ENCODE measurements at regions of chr2 and their contacts with region 1.

Region 1: DNA sequence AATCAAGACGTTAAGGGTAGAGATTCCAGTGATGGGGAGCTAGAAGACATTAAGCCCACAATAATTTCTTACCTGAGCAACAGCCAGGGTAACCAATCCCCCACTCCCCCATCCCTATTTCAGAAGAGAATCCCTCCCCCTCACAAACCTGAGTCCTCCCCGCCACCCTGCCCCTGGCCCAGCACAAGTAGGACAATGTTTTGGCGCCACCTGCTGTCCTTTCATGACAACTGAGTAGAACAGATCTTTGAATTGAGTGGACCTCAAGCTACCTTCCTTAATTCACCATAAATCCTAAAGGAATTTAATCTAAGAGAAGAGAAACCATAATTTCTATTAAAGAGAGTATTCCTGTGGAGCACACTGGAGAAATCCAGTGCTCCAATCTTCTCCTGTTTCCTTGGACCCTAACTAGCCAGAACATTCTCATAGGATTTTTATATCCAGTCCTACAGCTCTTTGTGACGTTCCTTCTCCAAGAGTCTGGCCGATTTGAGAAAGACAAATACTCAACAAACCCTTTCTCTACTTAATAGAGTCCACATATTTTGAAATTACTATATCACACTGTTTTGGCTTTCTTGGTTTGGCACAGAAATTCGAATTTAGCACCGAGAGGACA is 41.1 kb downstream of the NHEJ1 start:
- DNase-seq: peak; percentile 49 to 68 (median 61)
- H3K4me3 ChIP-seq: no peak overlapping the region
- H3K27ac ChIP-seq: no peak overlapping the region
- H3K4me1 ChIP-seq: peaks cover 0 to 11% (median 0%) of the 10 kb centered on the region in 4 experiments
- H3K27me3 ChIP-seq: no peaks in the 10 kb centered on the region

Region 2: GRCh38 chr2:219079417-219079816 is 40.1 kb before region 1 on chr2:
- CTCF ChIA-PET with region 1: interaction called, 336 read pairs
- POLR2A ChIA-PET with region 1: no interaction called
- DNase-seq: no peak
- H3K4me3 ChIP-seq: no peak overlapping the region
- H3K27ac ChIP-seq: no peak overlapping the region
- H3K4me1 ChIP-seq: peaks cover 0 to 5% (median 2%) of the 10 kb centered on the region in 4 experiments
- H3K27me3 ChIP-seq: no peaks in the 10 kb centered on the region

Region 3: GRCh38 chr2:219131744-219132143 is 12.2 kb after region 1 on chr2:
- CTCF ChIA-PET with region 1: interaction called, 23 read pairs
- POLR2A ChIA-PET with region 1: no interaction called
- DNase-seq: no peak
- H3K4me3 ChIP-seq: no peak overlapping the region
- H3K27ac ChIP-seq: no peak overlapping the region
- H3K4me1 ChIP-seq: peaks cover 0 to 8% (median 6%) of the 10 kb centered on the region in 4 experiments
- H3K27me3 ChIP-seq: no peaks in the 10 kb centered on the region